Adrenal gland (tissue), 19 donors: ENCODE measurements at regions of chr6 and their contacts with region 1.

Region 1: DNA sequence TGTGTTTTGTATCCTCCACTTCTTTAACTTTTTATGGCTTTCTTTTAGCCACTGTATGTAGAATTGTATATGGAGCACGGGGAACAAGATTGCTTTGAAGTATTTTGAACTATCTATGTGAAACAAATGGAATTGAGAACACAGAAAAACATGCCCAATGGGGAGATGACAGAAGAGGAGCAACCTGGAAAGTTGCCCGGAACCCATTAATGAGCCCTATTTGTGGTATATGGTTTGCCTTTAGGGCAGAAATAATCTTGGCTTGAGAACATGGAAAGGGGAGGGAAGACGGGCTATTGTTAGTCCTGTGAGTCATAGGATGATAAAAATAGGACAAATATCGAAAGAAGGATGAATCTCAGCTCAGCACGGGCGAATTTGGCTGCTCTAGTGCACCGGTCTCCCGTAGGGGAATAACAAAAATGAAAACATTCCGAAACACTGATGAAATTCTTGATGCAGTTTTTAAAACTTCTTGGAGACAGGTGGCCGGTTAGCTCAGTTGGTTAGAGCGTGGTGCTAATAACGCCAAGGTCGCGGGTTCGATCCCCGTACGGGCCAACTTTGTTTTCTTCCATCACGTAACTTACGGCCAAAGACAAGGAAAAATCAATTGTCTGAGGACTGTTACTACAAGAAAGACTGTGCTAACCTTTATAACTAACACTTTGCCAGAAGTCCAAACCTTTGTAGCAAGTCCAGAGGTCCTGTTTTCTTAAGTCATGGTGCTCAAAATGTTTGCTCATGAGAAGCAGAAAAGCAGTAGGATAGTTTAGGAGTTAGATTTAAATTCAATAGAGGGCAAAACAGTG is 15.7 kb downstream of the HMGN4 start:
- DNase-seq: peak; percentile 78 to 95 (median 82)
- H3K4me3 ChIP-seq: peak overlapping the region in 3 of 4 donors; percentile 3 to 49 (median 18)
- H3K27ac ChIP-seq: peak overlapping the region in 4 of 5 donors; percentile 59 to 75 (median 72)
- H3K4me1 ChIP-seq: peaks cover 3 to 13% of the 10 kb centered on the region in 2 donors
- H3K27me3 ChIP-seq: no peaks in the 10 kb centered on the region
- CTCF ChIP-seq: no peak
- POLR2A ChIP-seq: no peak

Region 2: GRCh38 chr6:26312501-26313390 is 241.1 kb before region 1 on chr6:
- intact Hi-C with region 1: loop called in 1 of 2 experiments (anchors 10 kb)
- DNase-seq: peak; percentile 69 to 93 (median 81)
- H3K4me3 ChIP-seq: peak overlapping the region in 3 of 4 donors; percentile 13 to 69 (median 44)
- H3K27ac ChIP-seq: peak overlapping the region in 4 of 5 donors; percentile 27 to 70 (median 58)
- H3K4me1 ChIP-seq: peaks cover 7 to 17% of the 10 kb centered on the region in 2 donors
- H3K27me3 ChIP-seq: no peaks in the 10 kb centered on the region
- CTCF ChIP-seq: no peak
- POLR2A ChIP-seq: no peak